ENCODE measurements at regions of chr3 and their contacts with region 1.

Region 1: GRCh38 chr3:132343018-132343612 is 25.9 kb downstream of the ACP3 start:
- DNase-seq: peak; percentile 17
- H3K4me3 ChIP-seq: peak overlapping the region in 1 of 4 donors; percentile 19
- H3K27ac ChIP-seq: no peak overlapping the region
- H3K4me1 ChIP-seq: peaks cover 0 to 4% (median 0%) of the 10 kb centered on the region in 4 donors
- H3K27me3 ChIP-seq: no peaks in the 10 kb centered on the region
- CTCF ChIP-seq: peak; percentile 77 to 89 (median 79)
- EP300 ChIP-seq: no peak
- POLR2A ChIP-seq: no peak

Region 2: GRCh38 chr3:132145833-132146232 is 197.3 kb before region 1 on chr3:
- in situ Hi-C with region 1: no loop called
- intact Hi-C with region 1: no loop called
- DNase-seq: no peak
- H3K4me3 ChIP-seq: no peak overlapping the region
- H3K27ac ChIP-seq: no peak overlapping the region
- H3K4me1 ChIP-seq: no peaks in the 10 kb centered on the region
- H3K27me3 ChIP-seq: no peaks in the 10 kb centered on the region
- CTCF ChIP-seq: no peak
- EP300 ChIP-seq: no peak
- POLR2A ChIP-seq: no peak

Region 3: GRCh38 chr3:132253262-132253878 is 89.7 kb before region 1 on chr3:
- in situ Hi-C with region 1: loop called (anchors 5 to 10 kb)
- intact Hi-C with region 1: no loop called
- DNase-seq: peak; percentile 16
- H3K4me3 ChIP-seq: no peak overlapping the region
- H3K27ac ChIP-seq: no peak overlapping the region
- H3K4me1 ChIP-seq: no peaks in the 10 kb centered on the region
- H3K27me3 ChIP-seq: no peaks in the 10 kb centered on the region
- CTCF ChIP-seq: peak; percentile 60 to 73 (median 71)
- EP300 ChIP-seq: no peak
- POLR2A ChIP-seq: no peak

Region 4: GRCh38 chr3:132405188-132405587 is 62.1 kb after region 1 on chr3:
- in situ Hi-C with region 1: loop called in 2 of 4 experiments (anchors 5 kb)
- intact Hi-C with region 1: no loop called
- DNase-seq: no peak
- H3K4me3 ChIP-seq: no peak overlapping the region
- H3K27ac ChIP-seq: no peak overlapping the region
- H3K4me1 ChIP-seq: peaks cover 0 to 7% (median 1%) of the 10 kb centered on the region in 4 donors
- H3K27me3 ChIP-seq: no peaks in the 10 kb centered on the region
- CTCF ChIP-seq: no peak
- EP300 ChIP-seq: no peak
- POLR2A ChIP-seq: no peak

Measured in transverse colon (tissue), 4 donors.